ENCODE measurements at regions of chr16 and their contacts with region 1.

Region 1: DNA sequence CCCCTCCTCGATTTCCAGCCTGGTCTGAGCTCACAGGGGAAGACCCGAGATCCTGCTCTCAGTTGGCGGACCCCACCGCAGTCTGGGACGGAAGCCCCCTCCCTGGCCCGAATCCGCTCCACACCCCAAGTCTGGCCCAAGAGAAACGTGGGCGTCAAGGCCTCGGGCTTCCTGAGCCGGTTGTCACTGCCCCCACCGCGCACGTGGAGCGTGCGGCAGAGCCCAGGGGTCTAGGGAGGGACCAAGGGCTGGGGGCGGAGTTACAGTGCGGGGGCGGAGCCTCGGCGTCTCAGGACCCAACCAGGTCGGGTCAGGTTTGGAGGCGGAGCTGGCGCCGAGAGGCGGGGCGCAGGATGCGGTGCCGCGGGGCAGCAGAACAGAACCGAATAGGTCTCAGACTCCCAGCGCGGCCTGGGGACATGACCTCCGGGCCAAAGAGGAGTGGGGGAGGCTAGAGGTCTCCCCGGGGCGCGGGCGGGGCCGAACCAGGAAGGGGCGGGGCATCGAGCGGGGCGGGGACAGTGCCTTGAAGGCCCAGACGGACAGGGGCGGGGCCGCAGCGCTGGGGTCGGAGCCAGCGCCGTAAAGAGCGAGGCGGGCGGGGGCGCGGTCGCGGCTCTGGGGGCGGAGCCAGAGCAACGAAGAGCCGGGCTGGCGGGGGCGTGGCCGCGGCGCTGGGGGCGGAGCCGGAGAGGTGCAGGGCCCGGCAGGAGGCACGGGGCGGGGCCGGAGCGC is 431 bp upstream of the ZFPM1 start:
- DNase-seq: peak; percentile 95 to 100 (median 98)
- ATAC-seq: peak; percentile 90
- H3K4me3 ChIP-seq: peak overlapping the region; percentile 61
- H3K4me3 Mint-ChIP-seq: peak overlapping the region; percentile 81 to 94 (median 84)
- H3K27ac ChIP-seq: peak overlapping the region; percentile 80
- H3K27ac Mint-ChIP-seq: peak overlapping the region; percentile 67 to 95 (median 87)
- H3K4me1 ChIP-seq: peaks cover 20 to 28% of the 10 kb centered on the region in 2 donors
- H3K4me1 Mint-ChIP-seq: peaks cover 19 to 29% (median 26%) of the 10 kb centered on the region in 7 donors
- H3K27me3 ChIP-seq: no peaks in the 10 kb centered on the region
- H3K27me3 Mint-ChIP-seq: peaks cover 0 to 9% (median 0%) of the 10 kb centered on the region in 5 donors

Region 2: GRCh38 chr16:88430524-88431446 is 21.9 kb before region 1 on chr16:
- CTCF ChIA-PET with region 1: no interaction called
- POLR2A ChIA-PET with region 1: no interaction called
- intact Hi-C with region 1: loop called in 1 of 2 experiments (anchors 1 kb)
- DNase-seq: peak in 7 of 9 donors; percentile 34 to 55 (median 45)
- ATAC-seq: peak; percentile 58
- H3K4me3 ChIP-seq: peak overlapping the region; percentile 51
- H3K4me3 Mint-ChIP-seq: peak overlapping the region; percentile 24 to 79 (median 64)
- H3K27ac ChIP-seq: peak overlapping the region; percentile 57
- H3K27ac Mint-ChIP-seq: peak overlapping the region in 2 of 9 donors; percentile 34 to 41
- H3K4me1 ChIP-seq: peaks cover 5 to 7% of the 10 kb centered on the region in 2 donors
- H3K4me1 Mint-ChIP-seq: peaks cover 0 to 11% (median 0%) of the 10 kb centered on the region in 7 donors
- H3K27me3 ChIP-seq: no peaks in the 10 kb centered on the region
- H3K27me3 Mint-ChIP-seq: peaks cover 0 to 10% (median 0%) of the 10 kb centered on the region in 5 donors

Region 3: GRCh38 chr16:88527186-88527936 is 74.7 kb after region 1 on chr16:
- CTCF ChIA-PET with region 1: interaction called, 3 read pairs
- POLR2A ChIA-PET with region 1: no interaction called
- intact Hi-C with region 1: loop called (anchors 2 kb)
- DNase-seq: peak in 8 of 9 donors; percentile 49 to 78 (median 62)
- ATAC-seq: peak; percentile 75
- H3K4me3 ChIP-seq: no peak overlapping the region
- H3K4me3 Mint-ChIP-seq: no peak overlapping the region
- H3K27ac ChIP-seq: no peak overlapping the region
- H3K27ac Mint-ChIP-seq: no peak overlapping the region
- H3K4me1 ChIP-seq: peaks cover 0 to 7% of the 10 kb centered on the region in 2 donors
- H3K4me1 Mint-ChIP-seq: peaks cover 0 to 13% (median 5%) of the 10 kb centered on the region in 7 donors
- H3K27me3 ChIP-seq: no peaks in the 10 kb centered on the region
- H3K27me3 Mint-ChIP-seq: no peaks in the 10 kb centered on the region

Region 4: DNA sequence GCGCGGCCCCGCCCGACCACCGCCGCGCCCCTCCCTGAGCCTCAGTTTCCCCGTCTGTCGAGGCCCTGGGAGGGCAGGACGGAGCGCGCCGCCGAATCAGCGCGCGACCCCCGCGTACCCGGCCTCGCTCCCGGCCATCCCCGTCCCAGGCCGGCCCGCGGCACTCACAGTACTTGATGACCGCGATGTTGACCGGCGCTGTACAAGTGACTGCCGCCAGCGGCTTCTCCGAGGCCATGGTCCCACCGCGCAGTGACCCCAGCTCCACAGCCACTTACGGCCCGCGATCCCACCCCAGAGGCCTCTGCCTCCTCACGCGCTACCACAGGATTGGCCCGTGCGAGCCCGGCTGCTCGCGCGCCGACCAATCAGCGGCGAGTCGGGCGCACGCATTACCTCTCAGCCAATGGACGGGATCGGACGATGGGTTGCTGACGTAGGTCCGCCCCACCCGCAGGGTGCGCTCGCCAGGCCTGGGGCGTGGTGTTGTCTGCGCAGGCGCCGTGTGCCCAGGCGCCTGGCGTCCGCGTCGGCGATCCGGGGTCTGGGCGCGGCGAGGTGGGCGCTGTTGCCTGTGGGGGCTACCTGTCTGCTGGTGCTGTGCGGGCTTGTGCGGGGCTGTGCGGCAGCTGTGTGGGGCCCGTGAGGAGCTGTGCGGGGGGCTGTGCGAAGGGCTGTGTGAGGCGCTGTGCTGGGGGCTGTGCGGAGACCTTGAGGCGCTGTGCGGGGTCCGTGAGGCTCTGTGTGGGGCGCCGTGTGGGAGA is 210.4 kb after region 1 on chr16 and contains the start of gene MVD:
- CTCF ChIA-PET with region 1: no interaction called
- POLR2A ChIA-PET with region 1: no interaction called
- intact Hi-C with region 1: loop called in 1 of 2 experiments (anchors 1 kb)
- DNase-seq: peak; percentile 88 to 96 (median 94)
- ATAC-seq: peak; percentile 99
- H3K4me3 ChIP-seq: peak within 1 kb of the TSS; percentile 89
- H3K4me3 Mint-ChIP-seq: peak within 1 kb of the TSS; percentile 91 to 96 (median 94)
- H3K27ac ChIP-seq: peak within 1 kb of the TSS; percentile 95
- H3K27ac Mint-ChIP-seq: peak within 1 kb of the TSS; percentile 56 to 95 (median 93)
- H3K4me1 ChIP-seq: peaks cover 8% of the 10 kb centered on the region in 2 donors
- H3K4me1 Mint-ChIP-seq: peaks cover 12 to 26% (median 19%) of the 10 kb centered on the region in 7 donors
- H3K27me3 ChIP-seq: no peaks in the 10 kb centered on the region
- H3K27me3 Mint-ChIP-seq: no peaks in the 10 kb centered on the region
- total RNA-seq, gene MVD: 37.7 to 66.9 (median 42.7) TPM

Region 5: DNA sequence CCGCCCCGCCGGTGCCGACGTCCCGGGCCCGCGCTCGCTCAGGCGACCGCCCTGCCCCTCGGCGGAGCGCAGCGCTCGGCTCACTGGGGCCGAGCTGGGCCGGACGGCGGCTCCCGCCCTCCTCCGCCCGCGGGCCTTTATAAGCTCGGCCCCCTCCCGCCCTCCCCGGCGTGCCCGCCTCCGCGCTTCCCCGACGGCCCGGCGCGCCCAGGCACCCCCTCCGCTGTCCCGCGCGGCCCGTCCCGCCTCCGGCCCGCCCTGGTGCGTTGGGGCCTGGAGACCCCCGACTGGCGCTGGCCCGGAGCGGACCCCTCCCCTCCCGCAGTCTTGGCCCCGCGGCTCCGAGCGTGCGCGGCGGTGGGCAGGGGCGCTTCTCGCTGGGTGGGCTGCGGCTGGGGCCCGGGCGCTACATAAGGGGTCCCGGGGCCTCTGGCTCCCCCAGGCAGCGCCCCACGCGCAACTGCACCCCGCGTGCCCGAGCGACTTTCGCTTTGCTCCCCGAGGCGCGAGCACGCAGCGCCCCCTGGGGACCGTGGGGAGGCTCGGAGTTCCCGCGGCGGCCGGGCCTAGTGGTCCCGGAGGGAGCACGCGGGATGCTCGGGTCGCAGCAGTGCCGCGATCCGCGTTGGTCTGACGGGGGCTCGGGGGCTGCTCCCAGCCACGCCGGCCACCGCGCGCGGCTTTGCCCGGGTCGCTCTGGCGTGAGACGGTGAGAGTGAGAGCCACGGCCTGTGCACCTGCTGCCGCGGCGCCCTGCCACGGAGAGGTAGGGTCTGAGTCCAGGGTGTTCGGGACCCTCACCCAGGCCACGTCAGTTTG is 332.7 kb after region 1 on chr16 and contains the start of gene PIEZO1:
- CTCF ChIA-PET with region 1: no interaction called
- POLR2A ChIA-PET with region 1: no interaction called
- intact Hi-C with region 1: loop called in 1 of 2 experiments (anchors 10 kb)
- DNase-seq: peak; percentile 76 to 93 (median 85)
- ATAC-seq: peak; percentile 77
- H3K4me3 ChIP-seq: peak within 1 kb of the TSS; percentile 54
- H3K4me3 Mint-ChIP-seq: peak within 1 kb of the TSS; percentile 66 to 87 (median 76)
- H3K27ac ChIP-seq: peak within 1 kb of the TSS; percentile 72
- H3K27ac Mint-ChIP-seq: peak within 1 kb of the TSS in 6 of 9 donors; percentile 45 to 92 (median 61)
- H3K4me1 ChIP-seq: peaks cover 48 to 49% of the 10 kb centered on the region in 2 donors
- H3K4me1 Mint-ChIP-seq: peaks cover 35 to 45% (median 45%) of the 10 kb centered on the region in 7 donors
- H3K27me3 ChIP-seq: no peaks in the 10 kb centered on the region
- H3K27me3 Mint-ChIP-seq: no peaks in the 10 kb centered on the region
- total RNA-seq, gene PIEZO1: 84.5 to 237 (median 124) TPM

Region 6: GRCh38 chr16:89720813-89721545 is 1268.3 kb after region 1 on chr16 and contains the starts of genes VPS9D1 and ZNF276:
- CTCF ChIA-PET with region 1: no interaction called
- POLR2A ChIA-PET with region 1: no interaction called
- intact Hi-C with region 1: loop called in 1 of 2 experiments (anchors 10 kb)
- DNase-seq: peak in 7 of 9 donors; percentile 73 to 88 (median 87)
- ATAC-seq: peak; percentile 67
- H3K4me3 ChIP-seq: peak within 1 kb of the TSS; percentile 94
- H3K4me3 Mint-ChIP-seq: peak within 1 kb of the TSS; percentile 88 to 99 (median 94)
- H3K27ac ChIP-seq: peak within 1 kb of the TSS; percentile 89
- H3K27ac Mint-ChIP-seq: peak within 1 kb of the TSS; percentile 88 to 99 (median 95)
- H3K4me1 ChIP-seq: peaks cover 27 to 35% of the 10 kb centered on the region in 2 donors
- H3K4me1 Mint-ChIP-seq: peaks cover 13 to 37% (median 30%) of the 10 kb centered on the region in 7 donors
- H3K27me3 ChIP-seq: no peaks in the 10 kb centered on the region
- H3K27me3 Mint-ChIP-seq: no peaks in the 10 kb centered on the region
- total RNA-seq, gene VPS9D1: 11.2 to 28.9 (median 13.3) TPM
- total RNA-seq, gene ZNF276: 75.4 to 160 (median 137) TPM

Measured in naive thymus-derived CD4-positive, alpha-beta T cell (primary cell).